ENCODE measurements at regions of chr16 and their contacts with region 1.

Region 1: DNA sequence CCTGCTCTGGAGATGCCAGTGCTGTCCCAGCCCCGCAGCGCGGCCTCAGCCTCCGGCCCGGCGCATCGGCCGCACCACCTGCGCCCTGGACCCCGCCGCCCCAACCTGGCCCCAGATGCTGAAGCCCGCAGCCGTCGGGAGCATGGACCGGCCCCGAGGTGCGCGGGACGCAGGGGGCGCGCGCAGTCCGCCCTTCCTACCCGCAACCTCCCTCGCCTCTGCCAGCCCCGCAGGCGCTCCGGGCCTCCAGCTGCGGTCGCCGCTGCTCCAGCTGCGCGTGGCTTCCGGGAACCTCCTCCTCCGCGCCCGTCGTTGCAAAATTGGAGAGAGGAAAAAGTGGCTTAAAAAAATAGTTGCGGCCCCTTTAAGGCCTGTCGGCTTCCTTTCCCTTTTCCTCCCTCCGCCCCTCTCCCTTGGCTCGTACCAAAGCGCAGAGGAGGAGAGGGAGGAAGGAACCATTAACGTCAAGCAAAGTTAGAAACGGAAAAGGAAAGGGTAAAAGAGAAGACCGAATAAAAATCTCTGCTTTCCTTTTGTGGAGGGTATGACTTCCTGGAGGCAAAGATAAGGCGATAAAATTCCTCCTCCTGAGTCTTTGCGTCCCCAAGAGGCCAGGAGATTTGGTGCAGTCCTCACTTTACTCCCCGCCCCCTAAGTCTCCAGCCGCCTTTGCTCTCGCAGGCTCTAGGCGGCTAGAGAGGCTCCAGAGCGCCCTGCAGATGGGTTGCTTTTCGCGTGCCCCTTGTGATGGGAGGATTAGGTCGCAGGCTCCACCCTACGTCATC is at the start of gene CDIPT:
- DNase-seq: peak; percentile 76 to 97 (median 93)
- ATAC-seq: peak; percentile 99
- H3K4me3 ChIP-seq: peak within 1 kb of the TSS; percentile 66
- H3K4me3 Mint-ChIP-seq: peak within 1 kb of the TSS; percentile 83 to 100 (median 96)
- H3K27ac ChIP-seq: peak within 1 kb of the TSS; percentile 90
- H3K27ac Mint-ChIP-seq: peak within 1 kb of the TSS; percentile 93 to 100 (median 99)
- H3K4me1 ChIP-seq: peaks cover 13 to 17% of the 10 kb centered on the region in 2 donors
- H3K4me1 Mint-ChIP-seq: peaks cover 12 to 35% (median 26%) of the 10 kb centered on the region in 7 donors
- H3K27me3 ChIP-seq: no peaks in the 10 kb centered on the region
- H3K27me3 Mint-ChIP-seq: peaks cover 0 to 3% (median 0%) of the 10 kb centered on the region in 5 donors
- total RNA-seq, gene CDIPT: 36.5 to 92.0 (median 69.9) TPM

Region 2: GRCh38 chr16:29790183-29790952 is 72.7 kb before region 1 on chr16 and contains the start of gene KIF22:
- CTCF ChIA-PET with region 1: no interaction called
- POLR2A ChIA-PET with region 1: interaction called, 5 read pairs
- intact Hi-C with region 1: loop called (anchors 1 kb)
- DNase-seq: peak; percentile 98 to 100 (median 100)
- ATAC-seq: peak; percentile 98
- H3K4me3 ChIP-seq: peak within 1 kb of the TSS; percentile 83
- H3K4me3 Mint-ChIP-seq: peak within 1 kb of the TSS; percentile 92 to 100 (median 98)
- H3K27ac ChIP-seq: peak within 1 kb of the TSS; percentile 88
- H3K27ac Mint-ChIP-seq: peak within 1 kb of the TSS; percentile 93 to 99 (median 99)
- H3K4me1 ChIP-seq: peaks cover 21 to 29% of the 10 kb centered on the region in 2 donors
- H3K4me1 Mint-ChIP-seq: peaks cover 23 to 59% (median 46%) of the 10 kb centered on the region in 7 donors
- H3K27me3 ChIP-seq: no peaks in the 10 kb centered on the region
- H3K27me3 Mint-ChIP-seq: peaks cover 0 to 2% (median 0%) of the 10 kb centered on the region in 5 donors
- total RNA-seq, gene KIF22: 62.5 to 141 (median 81.3) TPM

Region 3: DNA sequence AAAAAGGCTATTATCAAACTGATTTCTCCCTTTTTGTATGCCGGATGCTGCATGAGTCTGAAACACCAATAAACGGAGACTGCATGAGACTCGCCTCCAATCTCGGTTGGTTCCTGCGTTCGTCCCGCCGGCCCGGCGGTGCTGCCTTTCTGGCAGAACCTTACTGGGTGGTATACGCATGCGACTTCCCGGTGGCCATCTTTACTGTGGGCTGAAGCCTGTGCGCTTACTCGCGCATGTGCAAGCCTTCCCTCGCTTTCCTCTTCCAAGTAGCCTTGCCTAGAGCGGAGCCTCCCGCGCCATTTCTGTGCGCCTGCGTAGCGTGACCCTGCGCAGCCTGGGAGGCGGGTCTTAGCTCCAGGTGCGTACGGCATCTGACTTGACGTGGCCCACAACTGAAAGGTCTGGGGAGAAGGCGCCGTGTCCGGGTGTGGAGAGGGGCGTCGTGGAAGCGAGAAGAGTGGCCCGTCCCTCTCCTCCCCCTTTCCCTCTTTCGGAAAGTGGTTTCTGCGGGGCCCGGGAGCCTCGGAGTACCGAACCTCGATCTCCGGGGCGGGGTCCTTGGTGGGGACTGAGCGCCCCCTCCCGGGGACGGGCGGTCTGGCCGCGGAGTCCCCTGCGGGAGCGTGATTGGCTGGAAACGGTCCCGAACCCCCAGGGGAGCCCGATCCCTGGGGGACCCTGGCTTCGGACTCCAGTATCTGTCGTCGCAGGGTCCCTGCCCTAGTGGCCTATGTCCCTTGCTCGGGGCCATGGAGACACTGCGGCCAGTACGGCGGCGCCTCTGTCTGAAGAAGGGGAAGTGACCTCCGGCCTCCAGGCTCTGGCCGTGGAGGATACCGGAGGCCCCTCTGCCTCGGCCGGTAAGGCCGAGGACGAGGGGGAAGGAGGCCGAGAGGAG is 47.0 kb before region 1 on chr16 and contains the start of gene PAGR1:
- CTCF ChIA-PET with region 1: interaction called, 3 read pairs
- POLR2A ChIA-PET with region 1: interaction called, 4 read pairs
- intact Hi-C with region 1: loop called (anchors 1 kb)
- DNase-seq: peak; percentile 92 to 99 (median 99)
- ATAC-seq: peak; percentile 87
- H3K4me3 ChIP-seq: peak within 1 kb of the TSS; percentile 99
- H3K4me3 Mint-ChIP-seq: peak within 1 kb of the TSS; percentile 85 to 100 (median 96)
- H3K27ac ChIP-seq: peak within 1 kb of the TSS; percentile 92
- H3K27ac Mint-ChIP-seq: peak within 1 kb of the TSS; percentile 95 to 99 (median 99)
- H3K4me1 ChIP-seq: peaks cover 29 to 41% of the 10 kb centered on the region in 2 donors
- H3K4me1 Mint-ChIP-seq: peaks cover 40 to 75% (median 59%) of the 10 kb centered on the region in 7 donors
- H3K27me3 ChIP-seq: no peaks in the 10 kb centered on the region
- H3K27me3 Mint-ChIP-seq: peaks cover 0 to 22% (median 0%) of the 10 kb centered on the region in 5 donors
- total RNA-seq, gene PAGR1: 17.5 to 42.0 (median 25.7) TPM

Region 4: GRCh38 chr16:29926005-29926710 is 63.1 kb after region 1 on chr16 and contains the start of gene KCTD13:
- CTCF ChIA-PET with region 1: interaction called, 4 read pairs
- POLR2A ChIA-PET with region 1: interaction called, 3 read pairs
- intact Hi-C with region 1: loop called (anchors 1 kb)
- DNase-seq: peak; percentile 81 to 99 (median 92)
- ATAC-seq: peak; percentile 96
- H3K4me3 ChIP-seq: peak within 1 kb of the TSS; percentile 88
- H3K4me3 Mint-ChIP-seq: peak within 1 kb of the TSS; percentile 89 to 95 (median 93)
- H3K27ac ChIP-seq: peak within 1 kb of the TSS; percentile 94
- H3K27ac Mint-ChIP-seq: peak within 1 kb of the TSS; percentile 91 to 98 (median 97)
- H3K4me1 ChIP-seq: peaks cover 7 to 18% of the 10 kb centered on the region in 2 donors
- H3K4me1 Mint-ChIP-seq: peaks cover 30 to 50% (median 40%) of the 10 kb centered on the region in 7 donors
- H3K27me3 ChIP-seq: no peaks in the 10 kb centered on the region
- H3K27me3 Mint-ChIP-seq: peaks cover 0 to 2% (median 0%) of the 10 kb centered on the region in 5 donors
- total RNA-seq, gene KCTD13: 40.7 to 81.1 (median 45.9) TPM

Region 5: GRCh38 chr16:29973384-29974246 is 110.5 kb after region 1 on chr16 and contains the start of gene TAOK2:
- CTCF ChIA-PET with region 1: no interaction called
- POLR2A ChIA-PET with region 1: interaction called, 6 read pairs
- intact Hi-C with region 1: loop called (anchors 1 kb)
- DNase-seq: peak; percentile 83 to 98 (median 89)
- ATAC-seq: peak; percentile 97
- H3K4me3 ChIP-seq: peak within 1 kb of the TSS; percentile 98
- H3K4me3 Mint-ChIP-seq: peak within 1 kb of the TSS; percentile 80 to 97 (median 94)
- H3K27ac ChIP-seq: peak within 1 kb of the TSS; percentile 78
- H3K27ac Mint-ChIP-seq: peak within 1 kb of the TSS; percentile 77 to 93 (median 91)
- H3K4me1 ChIP-seq: peaks cover 20 to 23% of the 10 kb centered on the region in 2 donors
- H3K4me1 Mint-ChIP-seq: peaks cover 23 to 39% (median 37%) of the 10 kb centered on the region in 7 donors
- H3K27me3 ChIP-seq: no peaks in the 10 kb centered on the region
- H3K27me3 Mint-ChIP-seq: no peaks in the 10 kb centered on the region
- total RNA-seq, gene TAOK2: 19.4 to 48.5 (median 42.9) TPM

Region 6: GRCh38 chr16:30005341-30006094 is 142.4 kb after region 1 on chr16:
- CTCF ChIA-PET with region 1: no interaction called
- POLR2A ChIA-PET with region 1: no interaction called
- intact Hi-C with region 1: loop called (anchors 1 to 2 kb)
- DNase-seq: peak in 7 of 9 donors; percentile 30 to 48 (median 43)
- ATAC-seq: peak; percentile 76
- H3K4me3 ChIP-seq: no peak overlapping the region
- H3K4me3 Mint-ChIP-seq: no peak overlapping the region
- H3K27ac ChIP-seq: no peak overlapping the region
- H3K27ac Mint-ChIP-seq: peak overlapping the region in 1 of 9 donors; percentile 48
- H3K4me1 ChIP-seq: peaks cover 4 to 6% of the 10 kb centered on the region in 2 donors
- H3K4me1 Mint-ChIP-seq: peaks cover 0 to 9% (median 4%) of the 10 kb centered on the region in 7 donors
- H3K27me3 ChIP-seq: peaks cover 0 to 4% of the 10 kb centered on the region in 2 donors
- H3K27me3 Mint-ChIP-seq: peaks cover 0 to 19% (median 0%) of the 10 kb centered on the region in 5 donors

Region 7: GRCh38 chr16:30052671-30053372 is 189.7 kb after region 1 on chr16:
- CTCF ChIA-PET with region 1: no interaction called
- POLR2A ChIA-PET with region 1: no interaction called
- intact Hi-C with region 1: loop called in 1 of 2 experiments (anchors 1 kb)
- DNase-seq: peak; percentile 70 to 96 (median 80)
- ATAC-seq: peak; percentile 87
- H3K4me3 ChIP-seq: peak overlapping the region; percentile 51
- H3K4me3 Mint-ChIP-seq: peak overlapping the region; percentile 82 to 90 (median 86)
- H3K27ac ChIP-seq: peak overlapping the region; percentile 51
- H3K27ac Mint-ChIP-seq: peak overlapping the region in 7 of 9 donors; percentile 58 to 86 (median 80)
- H3K4me1 ChIP-seq: peaks cover 4 to 5% of the 10 kb centered on the region in 2 donors
- H3K4me1 Mint-ChIP-seq: peaks cover 6 to 35% (median 24%) of the 10 kb centered on the region in 7 donors
- H3K27me3 ChIP-seq: no peaks in the 10 kb centered on the region
- H3K27me3 Mint-ChIP-seq: no peaks in the 10 kb centered on the region

Measured in naive thymus-derived CD4-positive, alpha-beta T cell (primary cell).